ENCODE measurements at regions of chr3 and their contacts with region 1.

Region 1: GRCh38 chr3:128426128-128426921 is 40.4 kb downstream of the DNAJB8 start:
- DNase-seq: peak; percentile 61 to 83
- H3K4me3 ChIP-seq: peak overlapping the region; percentile 23 to 45 (median 34)
- H3K27ac ChIP-seq: no peak overlapping the region
- H3K4me1 ChIP-seq: peaks cover 4 to 12% (median 9%) of the 10 kb centered on the region in 4 donors
- H3K27me3 ChIP-seq: peaks cover 0 to 55% (median 19%) of the 10 kb centered on the region in 3 donors
- CTCF ChIP-seq: peak in 5 of 7 experiments; percentile 46 to 98 (median 80)
- EP300 ChIP-seq: no peak
- POLR2A ChIP-seq: no peak

Region 2: GRCh38 chr3:128473180-128473519 is 46.8 kb after region 1 on chr3:
- intact Hi-C with region 1: no loop called
- DNase-seq: no peak
- H3K4me3 ChIP-seq: no peak overlapping the region
- H3K27ac ChIP-seq: no peak overlapping the region
- H3K4me1 ChIP-seq: no peaks in the 10 kb centered on the region
- H3K27me3 ChIP-seq: peaks cover 0 to 88% (median 22%) of the 10 kb centered on the region in 3 donors
- CTCF ChIP-seq: no peak
- EP300 ChIP-seq: no peak
- POLR2A ChIP-seq: no peak

Region 3: GRCh38 chr3:128489855-128490649 is 63.7 kb after region 1 on chr3:
- intact Hi-C with region 1: loop called (anchors 5 kb)
- DNase-seq: peak in 1 of 2 donors; percentile 69
- H3K4me3 ChIP-seq: peak overlapping the region; percentile 49 to 68 (median 58)
- H3K27ac ChIP-seq: peak overlapping the region in 4 of 5 donors; percentile 71 to 80 (median 73)
- H3K4me1 ChIP-seq: peaks cover 55 to 77% (median 68%) of the 10 kb centered on the region in 4 donors
- H3K27me3 ChIP-seq: peaks cover 61 to 100% (median 94%) of the 10 kb centered on the region in 3 donors
- CTCF ChIP-seq: no peak
- EP300 ChIP-seq: no peak
- POLR2A ChIP-seq: no peak

Region 4: GRCh38 chr3:128607710-128608048 is 181.4 kb after region 1 on chr3:
- intact Hi-C with region 1: loop called (anchors 5 kb)
- DNase-seq: no peak
- H3K4me3 ChIP-seq: peak overlapping the region; percentile 50 to 59 (median 54)
- H3K27ac ChIP-seq: peak overlapping the region; percentile 53 to 84 (median 64)
- H3K4me1 ChIP-seq: peaks cover 12 to 17% (median 14%) of the 10 kb centered on the region in 4 donors
- H3K27me3 ChIP-seq: no peaks in the 10 kb centered on the region
- CTCF ChIP-seq: no peak
- EP300 ChIP-seq: no peak
- POLR2A ChIP-seq: no peak

Measured in stomach (tissue), 19 donors.